B cell (primary cell): ENCODE measurements at regions of chr14 and their contacts with region 1.

Region 1: GRCh38 chr14:23320774-23321571 is at the start of gene PABPN1:
- DNase-seq: peak; percentile 100
- ATAC-seq: peak; percentile 84
- H3K4me3 ChIP-seq: peak within 1 kb of the TSS; percentile 61 to 89 (median 79)
- H3K4me3 Mint-ChIP-seq: peak within 1 kb of the TSS; percentile 93
- H3K27ac ChIP-seq: peak within 1 kb of the TSS; percentile 91 to 99
- H3K27ac Mint-ChIP-seq: peak within 1 kb of the TSS; percentile 99
- H3K4me1 ChIP-seq: peaks cover 21 to 24% of the 10 kb centered on the region in 2 donors
- H3K4me1 Mint-ChIP-seq: peaks cover 33% of the 10 kb centered on the region
- H3K27me3 ChIP-seq: no peaks in the 10 kb centered on the region
- H3K27me3 Mint-ChIP-seq: no peaks in the 10 kb centered on the region
- CTCF ChIP-seq: no peak
- total RNA-seq, gene PABPN1: 280 and 293 TPM in 2 replicates

Region 2: DNA sequence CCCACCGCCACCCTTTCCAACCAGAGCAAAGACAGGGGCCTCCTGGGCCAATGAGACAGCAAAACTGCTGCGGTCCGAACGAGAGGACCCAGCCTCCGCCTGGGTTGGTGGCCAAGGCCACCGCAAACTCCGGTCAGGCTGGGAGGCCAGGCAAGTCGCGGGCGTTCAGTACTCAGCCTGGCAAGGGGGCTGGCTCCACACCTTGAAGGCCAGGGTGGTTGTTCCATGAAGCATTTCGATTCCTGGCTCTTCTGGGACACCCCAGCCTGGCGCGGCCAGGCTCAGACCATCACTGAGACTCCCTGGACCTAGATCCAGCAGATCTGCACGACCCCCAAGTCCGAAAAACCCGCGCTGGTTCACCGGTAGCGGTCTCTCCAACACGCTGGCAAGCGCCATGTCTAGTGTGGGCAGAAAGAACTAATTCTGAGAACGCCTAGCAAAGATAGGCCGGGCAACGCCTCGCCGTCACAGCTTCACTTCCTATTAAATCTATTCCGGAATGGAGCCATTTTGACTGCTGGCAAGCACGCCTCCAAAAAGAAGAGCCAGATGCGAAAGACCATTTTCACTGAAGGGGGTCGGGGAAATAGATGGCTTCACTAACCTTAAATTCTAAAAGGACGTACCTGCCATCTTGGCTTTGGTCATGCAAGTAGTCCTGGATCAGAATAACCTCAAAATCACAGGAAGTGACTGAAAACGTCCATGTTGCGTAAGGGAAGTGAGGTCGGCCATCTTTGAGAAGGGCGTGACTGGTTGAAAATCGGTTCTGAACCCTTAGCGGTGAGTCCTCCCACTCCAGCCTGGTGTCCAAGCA is 286.3 kb before region 1 on chr14 and contains the start of gene PSMB5:
- CTCF ChIA-PET with region 1: no interaction called
- POLR2A ChIA-PET with region 1: no interaction called
- intact Hi-C with region 1: loop called (anchors 2 kb)
- DNase-seq: peak; percentile 96
- ATAC-seq: peak; percentile 92
- H3K4me3 ChIP-seq: peak within 1 kb of the TSS; percentile 62 to 100 (median 66)
- H3K4me3 Mint-ChIP-seq: peak within 1 kb of the TSS; percentile 86
- H3K27ac ChIP-seq: peak within 1 kb of the TSS; percentile 81 to 93
- H3K27ac Mint-ChIP-seq: peak within 1 kb of the TSS; percentile 93
- H3K4me1 ChIP-seq: peaks cover 14 to 20% of the 10 kb centered on the region in 2 donors
- H3K4me1 Mint-ChIP-seq: peaks cover 28% of the 10 kb centered on the region
- H3K27me3 ChIP-seq: no peaks in the 10 kb centered on the region
- H3K27me3 Mint-ChIP-seq: no peaks in the 10 kb centered on the region
- CTCF ChIP-seq: no peak
- total RNA-seq, gene PSMB5: 29.0 and 31.9 TPM in 2 replicates

Region 3: DNA sequence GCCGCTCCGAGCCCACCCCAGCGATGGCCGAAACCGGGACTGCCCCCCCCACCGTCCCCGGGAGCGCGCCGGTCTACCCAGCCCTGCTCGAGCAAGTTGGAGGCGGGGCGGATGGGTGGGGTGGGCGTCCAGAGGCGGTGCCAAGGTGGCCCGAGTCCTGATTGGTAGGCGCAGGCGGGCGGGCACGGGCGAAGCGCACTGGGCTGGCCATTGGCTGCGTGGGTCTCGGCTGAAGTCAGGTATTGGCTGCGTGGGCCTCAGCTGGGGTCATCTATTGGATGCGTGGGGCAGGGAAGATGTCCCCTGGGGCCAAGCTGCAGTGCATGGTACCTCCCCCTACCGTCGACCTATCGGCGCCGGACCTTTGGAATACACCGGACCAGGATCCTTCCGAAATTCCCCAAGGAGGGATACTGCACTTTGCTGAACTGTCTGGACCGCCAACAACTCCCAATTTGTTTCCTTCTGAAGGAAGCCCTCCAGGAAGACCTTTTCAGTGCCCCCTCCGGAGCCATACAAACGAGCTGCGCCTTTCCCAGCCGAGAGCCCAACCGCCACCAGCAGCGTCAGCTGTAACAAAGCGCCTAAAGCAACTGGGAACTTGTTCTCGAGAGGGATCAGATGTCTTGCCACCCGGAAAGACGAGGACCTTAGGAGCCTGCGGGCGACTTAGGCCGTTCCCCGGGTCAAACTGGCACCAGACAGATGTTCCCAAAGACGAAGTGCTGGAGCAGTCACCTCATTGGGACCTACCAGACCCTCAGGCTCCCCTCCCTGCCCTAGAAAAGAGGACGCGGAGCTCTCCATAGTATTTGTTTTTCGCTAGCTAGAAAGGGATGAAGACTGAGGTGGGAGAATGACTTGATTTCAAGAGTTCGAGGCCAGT is 34.7 kb before region 1 on chr14 and contains the start of gene HOMEZ:
- CTCF ChIA-PET with region 1: interaction called, 8 read pairs
- POLR2A ChIA-PET with region 1: interaction called, 13 read pairs
- intact Hi-C with region 1: loop called (anchors 1 kb)
- DNase-seq: peak; percentile 97
- ATAC-seq: peak; percentile 97
- H3K4me3 ChIP-seq: peak within 1 kb of the TSS; percentile 56 to 90 (median 83)
- H3K4me3 Mint-ChIP-seq: peak within 1 kb of the TSS; percentile 98
- H3K27ac ChIP-seq: peak within 1 kb of the TSS; percentile 49 to 83
- H3K27ac Mint-ChIP-seq: peak within 1 kb of the TSS; percentile 93
- H3K4me1 ChIP-seq: peaks cover 13 to 17% of the 10 kb centered on the region in 2 donors
- H3K4me1 Mint-ChIP-seq: peaks cover 23% of the 10 kb centered on the region
- H3K27me3 ChIP-seq: no peaks in the 10 kb centered on the region
- H3K27me3 Mint-ChIP-seq: no peaks in the 10 kb centered on the region
- CTCF ChIP-seq: no peak
- total RNA-seq, gene HOMEZ: 15.5 TPM in 2 replicates

Region 4: DNA sequence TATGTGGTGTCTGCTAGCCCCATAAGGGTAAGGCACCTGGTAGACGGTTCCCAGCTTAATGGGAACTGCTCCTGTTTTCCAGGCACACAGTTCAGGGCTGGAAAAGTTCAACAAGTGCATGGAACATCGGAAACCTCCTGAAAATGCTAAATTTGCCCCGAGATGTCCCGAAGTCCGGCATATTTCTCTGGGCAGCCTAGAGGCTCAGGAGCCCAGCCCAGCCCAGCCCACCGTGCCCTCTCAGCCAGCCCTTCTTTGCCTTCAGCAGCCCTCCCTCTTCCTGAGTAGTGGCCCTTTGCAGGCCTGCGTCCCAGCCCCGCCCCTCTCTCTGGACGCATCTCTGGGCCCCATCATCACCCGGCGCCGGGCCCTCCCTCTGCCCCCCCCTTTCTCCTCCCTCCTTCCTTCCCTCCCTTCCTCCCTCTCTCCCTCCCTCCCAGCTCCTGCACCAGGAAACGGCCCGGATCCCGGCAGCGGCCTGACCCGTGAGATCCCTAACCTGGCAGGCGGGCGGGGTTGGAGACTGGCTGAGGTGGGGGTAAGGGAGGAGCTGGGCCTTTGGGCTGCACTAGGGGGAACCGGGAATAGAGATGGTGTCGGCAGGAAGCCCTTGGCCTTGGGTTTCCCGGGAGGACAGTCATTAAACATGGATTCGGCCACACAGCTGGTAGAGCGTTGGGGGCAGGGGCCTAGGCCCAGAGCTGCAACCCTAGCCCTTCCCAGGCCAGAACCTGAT is 14.4 kb before region 1 on chr14 and contains the start of gene BCL2L2:
- CTCF ChIA-PET with region 1: interaction called, 56 read pairs
- POLR2A ChIA-PET with region 1: interaction called, 84 read pairs
- intact Hi-C with region 1: loop called (anchors 1 kb)
- DNase-seq: peak; percentile 57
- ATAC-seq: no peak
- H3K4me3 ChIP-seq: peak within 1 kb of the TSS in 4 of 5 experiments; percentile 31 to 59 (median 46)
- H3K4me3 Mint-ChIP-seq: peak within 1 kb of the TSS; percentile 81
- H3K27ac ChIP-seq: peak within 1 kb of the TSS; percentile 54 to 78
- H3K27ac Mint-ChIP-seq: peak within 1 kb of the TSS; percentile 85
- H3K4me1 ChIP-seq: peaks cover 14 to 30% of the 10 kb centered on the region in 2 donors
- H3K4me1 Mint-ChIP-seq: peaks cover 33% of the 10 kb centered on the region
- H3K27me3 ChIP-seq: no peaks in the 10 kb centered on the region
- H3K27me3 Mint-ChIP-seq: no peaks in the 10 kb centered on the region
- CTCF ChIP-seq: no peak
- total RNA-seq, gene BCL2L2: 12.9 and 17.8 TPM in 2 replicates

Region 5: GRCh38 chr14:23469127-23469905 is 148.3 kb after region 1 on chr14 and contains the start of gene NGDN:
- CTCF ChIA-PET with region 1: no interaction called
- POLR2A ChIA-PET with region 1: no interaction called
- intact Hi-C with region 1: loop called (anchors 1 kb)
- DNase-seq: peak; percentile 98
- ATAC-seq: peak; percentile 93
- H3K4me3 ChIP-seq: peak within 1 kb of the TSS; percentile 77 to 94 (median 92)
- H3K4me3 Mint-ChIP-seq: no peak within 1 kb of the TSS
- H3K27ac ChIP-seq: peak within 1 kb of the TSS; percentile 86 to 87
- H3K27ac Mint-ChIP-seq: no peak within 1 kb of the TSS
- H3K4me1 ChIP-seq: peaks cover 11 to 15% of the 10 kb centered on the region in 2 donors
- H3K4me1 Mint-ChIP-seq: peaks cover 7% of the 10 kb centered on the region
- H3K27me3 ChIP-seq: no peaks in the 10 kb centered on the region
- H3K27me3 Mint-ChIP-seq: peaks cover 7% of the 10 kb centered on the region
- CTCF ChIP-seq: peak; percentile 86
- total RNA-seq, gene NGDN: 81.8 and 84.4 TPM in 2 replicates

Region 6: DNA sequence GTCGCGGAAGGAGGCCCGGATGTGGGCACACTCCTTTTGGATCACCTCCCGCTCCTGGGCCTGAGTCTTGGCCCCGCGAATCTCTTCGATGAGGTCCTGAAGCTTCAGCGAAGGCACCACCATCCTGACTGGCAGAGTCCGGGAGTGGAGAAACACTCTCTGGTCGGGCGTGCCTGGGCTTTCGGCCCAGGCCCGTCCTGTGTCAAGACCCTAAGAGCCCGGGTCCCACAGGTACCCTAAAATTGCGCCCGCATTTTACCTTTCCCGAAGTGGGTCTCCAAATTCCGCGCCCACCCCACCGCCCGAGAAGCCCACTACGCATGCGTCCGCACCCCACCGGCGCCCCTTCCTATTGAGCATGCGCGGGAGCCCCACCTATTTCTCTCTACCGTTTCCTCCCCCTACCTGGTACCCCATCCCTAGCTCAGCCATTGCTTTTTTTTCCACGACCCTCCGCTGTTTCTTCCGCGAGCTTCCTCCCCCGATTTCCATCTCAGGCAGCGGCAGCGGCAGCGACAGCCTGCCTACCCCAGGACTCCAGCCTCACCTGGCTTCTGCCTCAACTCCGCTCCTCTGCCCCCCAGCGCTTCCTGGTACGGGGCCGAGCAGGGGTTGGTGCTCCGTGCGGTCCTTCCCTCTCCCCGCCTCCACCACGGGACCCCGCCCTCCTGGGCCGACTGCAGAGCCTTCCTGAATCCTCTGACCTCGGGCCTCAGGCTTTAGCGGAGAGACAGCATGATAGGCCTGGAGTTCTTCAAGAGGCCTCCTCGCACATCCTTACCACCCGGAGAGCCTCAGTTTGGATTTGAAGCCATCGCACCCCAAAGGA is 246.4 kb after region 1 on chr14 and contains the start of gene AP1G2:
- CTCF ChIA-PET with region 1: interaction called, 5 read pairs
- POLR2A ChIA-PET with region 1: interaction called, 5 read pairs
- intact Hi-C with region 1: loop called (anchors 2 kb)
- DNase-seq: peak; percentile 91
- ATAC-seq: peak; percentile 95
- H3K4me3 ChIP-seq: peak within 1 kb of the TSS; percentile 56 to 94 (median 80)
- H3K4me3 Mint-ChIP-seq: peak within 1 kb of the TSS; percentile 96
- H3K27ac ChIP-seq: peak within 1 kb of the TSS; percentile 71 to 72
- H3K27ac Mint-ChIP-seq: peak within 1 kb of the TSS; percentile 96
- H3K4me1 ChIP-seq: peaks cover 15 to 23% of the 10 kb centered on the region in 2 donors
- H3K4me1 Mint-ChIP-seq: peaks cover 36% of the 10 kb centered on the region
- H3K27me3 ChIP-seq: peaks cover 0 to 8% (median 3%) of the 10 kb centered on the region in 4 experiments
- H3K27me3 Mint-ChIP-seq: peaks cover 11% of the 10 kb centered on the region
- CTCF ChIP-seq: no peak
- total RNA-seq, gene AP1G2: 627 and 648 TPM in 2 replicates

Region 7: DNA sequence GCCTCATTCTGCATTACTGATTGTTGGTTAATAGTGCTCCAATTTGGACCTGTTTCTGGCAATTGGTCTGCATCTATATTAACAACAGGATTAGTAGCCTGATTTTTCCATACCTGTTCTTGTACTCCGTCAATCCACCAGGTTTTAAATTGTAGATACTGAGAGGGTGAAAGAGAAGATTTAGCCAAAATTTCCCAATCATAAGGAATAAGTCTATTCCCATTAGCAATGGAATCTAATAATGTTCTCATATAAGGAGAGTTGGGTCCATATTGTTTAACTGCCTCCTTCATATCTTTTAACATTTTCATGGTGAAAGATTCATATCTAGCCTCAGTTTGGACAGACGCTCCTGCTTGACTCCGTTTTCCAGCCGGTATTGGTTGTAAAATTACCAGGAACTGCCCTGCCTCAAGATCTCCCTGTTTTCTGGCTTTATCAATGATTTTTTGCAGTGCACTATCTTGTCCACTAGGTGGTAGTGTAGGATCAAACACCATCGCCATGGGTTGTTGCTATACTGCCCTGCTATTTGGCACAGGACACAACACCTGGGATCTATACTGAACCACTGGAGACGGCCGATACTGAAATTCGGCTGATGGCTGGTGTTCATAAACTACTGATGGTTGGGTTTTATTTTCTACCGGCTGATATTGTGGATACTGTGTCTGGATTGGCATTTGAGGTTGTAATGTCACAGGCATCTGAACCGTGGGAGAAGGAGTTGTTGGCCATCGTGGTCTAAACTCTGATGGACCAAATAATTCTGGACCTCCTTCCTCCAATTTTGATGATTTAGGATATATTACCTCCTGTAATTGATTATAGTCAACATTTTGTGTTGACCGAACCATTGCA is 692.9 kb after region 1 on chr14:
- CTCF ChIA-PET with region 1: no interaction called
- POLR2A ChIA-PET with region 1: no interaction called
- intact Hi-C with region 1: no loop called
- DNase-seq: peak; percentile 83
- ATAC-seq: peak; percentile 92
- H3K4me3 ChIP-seq: no peak overlapping the region
- H3K4me3 Mint-ChIP-seq: no peak overlapping the region
- H3K27ac ChIP-seq: no peak overlapping the region
- H3K27ac Mint-ChIP-seq: no peak overlapping the region
- H3K4me1 ChIP-seq: peaks cover 0 to 3% of the 10 kb centered on the region in 2 donors
- H3K4me1 Mint-ChIP-seq: peaks cover 30% of the 10 kb centered on the region
- H3K27me3 ChIP-seq: no peaks in the 10 kb centered on the region
- H3K27me3 Mint-ChIP-seq: no peaks in the 10 kb centered on the region
- CTCF ChIP-seq: peak; percentile 97